MCF 10A (cell line): ENCODE measurements at regions of chr1 and their contacts with region 1.

Region 1: DNA sequence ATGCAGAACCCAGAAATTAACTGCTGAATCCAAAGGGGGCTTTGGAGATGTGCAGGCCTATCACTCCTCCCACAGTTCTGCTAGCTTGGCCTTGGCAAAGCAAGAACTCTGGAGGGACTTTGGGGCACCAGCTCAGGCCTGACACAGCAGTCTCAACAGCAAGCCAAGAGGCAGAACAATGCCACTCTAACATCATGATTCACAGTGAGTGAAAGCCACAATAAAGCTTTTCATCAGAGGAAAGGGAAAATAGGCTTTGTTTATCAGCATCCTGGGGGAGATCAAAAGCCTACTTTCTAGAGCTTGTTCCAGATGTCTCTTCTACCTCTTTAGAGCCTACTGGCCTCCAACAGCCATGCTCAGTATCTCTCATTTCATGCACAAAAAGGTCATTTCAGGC is 283.4 kb downstream of the KCNH1 start:
- DNase-seq: no peak
- H3K4me3 Mint-ChIP-seq: no peak overlapping the region
- H3K27ac Mint-ChIP-seq: no peak overlapping the region
- H3K4me1 Mint-ChIP-seq: no peaks in the 10 kb centered on the region
- H3K27me3 Mint-ChIP-seq: no peaks in the 10 kb centered on the region
- CTCF ChIP-seq: no peak

Region 2: GRCh38 chr1:211118407-211119102 is 268.0 kb after region 1 on chr1:
- CTCF ChIA-PET with region 1: no interaction called
- POLR2A ChIA-PET with region 1: no interaction called
- intact Hi-C with region 1: loop called (anchors 10 kb)
- DNase-seq: peak; percentile 60
- H3K4me3 Mint-ChIP-seq: no peak overlapping the region
- H3K27ac Mint-ChIP-seq: no peak overlapping the region
- H3K4me1 Mint-ChIP-seq: peaks cover 12% of the 10 kb centered on the region
- H3K27me3 Mint-ChIP-seq: peaks cover 9% of the 10 kb centered on the region
- CTCF ChIP-seq: no peak